Keratinocyte (primary cell): ENCODE measurements at regions of chr17 and their contacts with region 1.

Region 1: GRCh38 chr17:59941131-59941530 is 23.4 kb downstream of the RNFT1 start:
- DNase-seq: no peak
- H3K4me3 ChIP-seq: no peak overlapping the region
- H3K27ac ChIP-seq: no peak overlapping the region
- H3K4me1 ChIP-seq: no peaks in the 10 kb centered on the region
- H3K27me3 ChIP-seq: no peaks in the 10 kb centered on the region
- CTCF ChIP-seq: no peak

Region 2: GRCh38 chr17:59892924-59893676 is 48.0 kb before region 1 on chr17 and contains the starts of genes RPS6KB1 and TUBD1:
- dilution Hi-C with region 1: no loop called
- DNase-seq: peak; percentile 96
- H3K4me3 ChIP-seq: peak within 1 kb of the TSS; percentile 93 to 97 (median 94)
- H3K27ac ChIP-seq: peak within 1 kb of the TSS; percentile 88
- H3K4me1 ChIP-seq: peaks cover 15% of the 10 kb centered on the region
- H3K27me3 ChIP-seq: no peaks in the 10 kb centered on the region
- CTCF ChIP-seq: no peak
- polyA plus RNA-seq, gene RPS6KB1: 13.4 to 19.7 TPM (median 14.2 TPM) in 3 replicates
- polyA plus RNA-seq, gene TUBD1: 5.5 to 7.6 TPM (median 5.9 TPM) in 3 replicates

Region 3: DNA sequence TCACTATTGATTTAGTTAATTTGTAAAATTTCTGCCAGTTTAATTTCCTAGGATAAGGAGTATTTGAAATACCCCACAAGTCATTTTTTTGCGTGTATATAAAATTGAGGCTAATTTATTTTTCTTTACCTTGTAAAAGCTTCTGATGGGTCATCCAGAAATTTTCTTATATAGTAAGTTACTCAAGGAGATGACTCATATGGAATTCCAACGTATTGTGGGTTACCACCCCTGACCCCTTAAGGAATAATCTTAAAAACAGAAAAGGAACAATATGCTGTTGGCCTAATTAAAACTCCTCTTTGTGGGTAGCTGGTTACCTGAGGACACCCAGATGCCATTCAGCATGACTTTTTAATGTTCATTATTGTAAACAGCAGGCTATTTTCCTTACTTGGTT is 124.0 kb after region 1 on chr17:
- dilution Hi-C with region 1: loop called (anchors 25 kb)
- DNase-seq: no peak
- H3K4me3 ChIP-seq: no peak overlapping the region
- H3K27ac ChIP-seq: no peak overlapping the region
- H3K4me1 ChIP-seq: peaks cover 4% of the 10 kb centered on the region
- H3K27me3 ChIP-seq: no peaks in the 10 kb centered on the region
- CTCF ChIP-seq: no peak

Region 4: GRCh38 chr17:60106220-60107059 is 165.3 kb after region 1 on chr17:
- dilution Hi-C with region 1: no loop called
- DNase-seq: no peak
- H3K4me3 ChIP-seq: no peak overlapping the region
- H3K27ac ChIP-seq: no peak overlapping the region
- H3K4me1 ChIP-seq: peaks cover 2% of the 10 kb centered on the region
- H3K27me3 ChIP-seq: no peaks in the 10 kb centered on the region
- CTCF ChIP-seq: no peak